SK-N-SH (cell line): ENCODE measurements at regions of chr2 and their contacts with region 1.

Region 1: DNA sequence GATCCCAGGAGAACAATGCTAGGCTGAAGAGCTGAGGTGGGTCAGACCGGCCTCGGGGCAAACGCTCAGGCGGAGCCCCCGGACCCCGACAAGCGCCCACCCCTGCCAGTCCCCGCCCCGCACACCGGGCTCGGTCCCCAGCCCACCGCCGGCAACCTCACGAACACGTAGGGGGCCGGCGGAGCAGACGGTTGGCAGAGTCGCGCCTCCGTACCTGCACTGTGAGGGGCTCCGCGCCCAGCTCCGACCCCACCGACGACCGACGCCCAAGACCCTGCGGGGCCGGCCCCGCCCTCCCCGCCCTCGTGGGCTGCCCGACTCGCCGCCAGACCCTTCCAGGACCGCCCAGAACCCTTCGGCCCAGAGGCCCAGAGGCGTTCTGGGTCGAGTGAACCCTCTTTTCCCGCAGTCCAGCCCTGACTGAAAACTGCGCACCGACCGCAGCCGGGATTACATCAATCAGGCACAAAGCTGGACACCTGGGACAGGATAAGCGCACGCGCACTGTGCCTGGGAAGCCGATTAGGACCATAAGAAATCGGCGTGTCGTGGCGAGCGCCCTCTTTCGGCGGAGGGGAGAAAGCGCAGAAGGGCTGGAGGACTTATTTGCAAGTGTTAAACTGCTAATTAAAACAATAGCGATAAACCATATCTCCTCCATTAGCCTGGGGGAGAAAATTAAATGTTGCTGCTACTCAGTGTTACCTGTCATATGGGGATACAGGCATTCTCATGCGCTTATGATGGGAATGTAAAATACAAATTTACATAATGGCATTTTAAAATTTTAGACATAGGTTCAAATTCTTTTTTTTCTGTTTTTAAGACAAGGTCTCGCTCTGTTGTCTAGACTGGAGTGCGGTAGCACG is 11.7 kb upstream of the DCTN1 start:
- DNase-seq: peak; percentile 94
- H3K4me3 ChIP-seq: peak overlapping the region; percentile 84 to 94
- H3K27ac ChIP-seq: peak overlapping the region; percentile 64 to 80
- H3K4me1 ChIP-seq: peaks cover 9 to 20% of the 10 kb centered on the region in 2 experiments; a peak in 3 of 4 replicates
- H3K27me3 ChIP-seq: no peaks in the 10 kb centered on the region
- CTCF ChIP-seq: peak; percentile 98
- EP300 ChIP-seq: no peak
- RAD21 ChIP-seq: peak; percentile 66

Region 2: GRCh38 chr2:74357627-74358026 is 34.2 kb before region 1 on chr2:
- CTCF ChIA-PET with region 1: interaction called, 14 read pairs
- POLR2A ChIA-PET with region 1: no interaction called
- DNase-seq: no peak
- H3K4me3 ChIP-seq: no peak overlapping the region
- H3K27ac ChIP-seq: no peak overlapping the region
- H3K4me1 ChIP-seq: no peaks in the 10 kb centered on the region
- H3K27me3 ChIP-seq: no peaks in the 10 kb centered on the region
- CTCF ChIP-seq: no peak
- EP300 ChIP-seq: no peak
- RAD21 ChIP-seq: no peak

Region 3: DNA sequence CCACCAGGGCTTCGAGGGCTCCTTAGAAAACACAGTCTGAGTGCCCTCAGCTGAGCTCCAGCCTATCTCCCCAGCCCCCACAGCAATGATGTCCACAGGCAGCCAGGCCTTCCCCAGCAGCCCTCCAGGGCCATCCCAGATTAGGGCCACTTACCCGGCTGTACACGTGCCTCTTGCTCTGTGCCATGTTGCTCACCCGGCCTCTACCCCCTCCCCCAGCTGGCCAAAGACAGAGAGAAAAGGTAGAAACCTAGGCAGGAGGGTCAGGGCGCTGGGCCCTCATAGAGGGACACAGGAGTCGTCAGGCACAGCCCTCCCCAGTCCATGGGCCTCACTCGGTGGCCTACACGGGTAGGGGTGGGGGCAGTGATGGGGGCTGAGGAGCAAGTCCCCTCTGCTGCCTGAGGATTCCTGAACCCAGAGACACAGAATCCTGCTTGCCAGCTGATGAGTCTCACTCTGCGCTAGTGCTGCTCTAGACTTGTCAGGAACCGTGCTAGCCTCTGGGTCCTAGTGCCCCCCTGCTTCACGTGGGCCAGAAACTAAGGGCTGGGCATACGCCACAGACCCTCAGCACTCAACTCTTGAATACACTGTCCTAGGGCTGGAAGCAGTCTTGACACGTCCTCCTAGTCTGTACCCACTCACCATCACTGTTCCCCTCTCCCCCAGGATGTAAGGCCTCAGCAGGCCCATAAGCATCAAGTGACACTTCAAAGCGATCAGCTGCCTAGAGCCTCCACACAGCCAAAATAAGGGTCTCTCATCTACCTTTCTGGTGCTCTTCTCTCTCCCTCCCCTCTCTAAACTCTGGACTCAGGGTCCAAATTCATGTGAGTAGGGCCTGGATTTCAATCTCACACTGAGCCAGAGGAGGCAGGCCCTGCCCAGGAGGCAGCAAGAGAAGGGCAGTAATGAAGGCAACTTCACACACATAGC is 11.7 kb before region 1 on chr2 and contains the start of gene DCTN1:
- CTCF ChIA-PET with region 1: interaction called, 24 read pairs
- POLR2A ChIA-PET with region 1: interaction called, 7 read pairs
- DNase-seq: peak; percentile 83
- H3K4me3 ChIP-seq: peak within 1 kb of the TSS; percentile 46 to 47
- H3K27ac ChIP-seq: peak within 1 kb of the TSS; percentile 37 to 62; a peak in 3 of 4 replicates
- H3K4me1 ChIP-seq: peaks cover 7 to 20% of the 10 kb centered on the region in 2 experiments; a peak in 2 of 4 replicates
- H3K27me3 ChIP-seq: no peaks in the 10 kb centered on the region
- CTCF ChIP-seq: no peak
- EP300 ChIP-seq: no peak
- RAD21 ChIP-seq: no peak
- polyA plus RNA-seq, gene DCTN1: 88.9 and 91.1 TPM in 2 replicates

Region 4: DNA sequence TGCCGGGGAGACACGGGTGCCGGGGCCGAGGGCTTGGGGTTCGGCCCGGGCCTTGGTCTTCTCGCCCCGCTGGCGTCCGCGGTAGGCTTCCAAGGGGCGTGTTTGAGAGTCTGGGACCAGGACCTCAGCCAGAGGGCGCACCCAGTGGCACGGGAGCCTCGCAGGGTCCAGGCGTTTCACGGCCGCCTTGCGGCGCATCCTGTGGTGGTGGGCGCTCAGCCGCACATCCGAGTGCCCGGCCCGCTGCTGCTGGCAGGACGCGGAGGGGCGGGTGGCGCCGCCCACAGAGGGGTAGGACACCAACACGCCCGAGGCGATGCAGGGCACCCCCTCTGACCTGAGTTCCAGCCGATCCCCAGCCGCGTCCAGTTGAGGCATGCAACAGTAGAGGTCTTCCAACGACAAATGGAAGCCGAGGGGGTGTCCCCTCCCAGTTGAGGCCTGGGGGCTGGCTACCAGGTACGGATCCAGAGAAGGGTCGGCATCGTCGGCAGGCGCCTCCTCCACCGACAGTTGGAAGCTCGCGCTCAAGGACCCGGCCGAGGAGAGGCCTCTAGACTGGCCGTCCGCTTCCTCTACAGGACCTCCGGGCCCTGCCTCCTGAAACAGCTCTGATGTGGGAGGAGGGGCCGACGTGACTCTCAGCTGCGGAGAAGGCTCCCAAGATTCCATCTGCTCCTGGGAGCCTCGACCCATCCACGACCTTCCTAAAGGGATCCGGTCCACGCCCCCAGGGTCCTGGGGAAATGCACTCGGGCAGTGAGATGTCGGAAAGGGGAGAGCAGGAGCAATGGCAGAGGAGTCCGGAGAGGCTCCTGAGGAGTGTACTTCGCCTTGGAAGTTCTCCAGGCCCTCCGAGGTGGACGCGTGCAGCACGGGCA is 23.3 kb after region 1 on chr2:
- CTCF ChIA-PET with region 1: interaction called, 22 read pairs
- POLR2A ChIA-PET with region 1: interaction called, 6 read pairs
- DNase-seq: peak; percentile 28
- H3K4me3 ChIP-seq: no peak overlapping the region
- H3K27ac ChIP-seq: no peak overlapping the region
- H3K4me1 ChIP-seq: peaks cover 0 to 2% of the 10 kb centered on the region in 2 experiments; a peak in 1 of 4 replicates
- H3K27me3 ChIP-seq: no peaks in the 10 kb centered on the region
- CTCF ChIP-seq: no peak
- EP300 ChIP-seq: no peak
- RAD21 ChIP-seq: no peak

Region 5: DNA sequence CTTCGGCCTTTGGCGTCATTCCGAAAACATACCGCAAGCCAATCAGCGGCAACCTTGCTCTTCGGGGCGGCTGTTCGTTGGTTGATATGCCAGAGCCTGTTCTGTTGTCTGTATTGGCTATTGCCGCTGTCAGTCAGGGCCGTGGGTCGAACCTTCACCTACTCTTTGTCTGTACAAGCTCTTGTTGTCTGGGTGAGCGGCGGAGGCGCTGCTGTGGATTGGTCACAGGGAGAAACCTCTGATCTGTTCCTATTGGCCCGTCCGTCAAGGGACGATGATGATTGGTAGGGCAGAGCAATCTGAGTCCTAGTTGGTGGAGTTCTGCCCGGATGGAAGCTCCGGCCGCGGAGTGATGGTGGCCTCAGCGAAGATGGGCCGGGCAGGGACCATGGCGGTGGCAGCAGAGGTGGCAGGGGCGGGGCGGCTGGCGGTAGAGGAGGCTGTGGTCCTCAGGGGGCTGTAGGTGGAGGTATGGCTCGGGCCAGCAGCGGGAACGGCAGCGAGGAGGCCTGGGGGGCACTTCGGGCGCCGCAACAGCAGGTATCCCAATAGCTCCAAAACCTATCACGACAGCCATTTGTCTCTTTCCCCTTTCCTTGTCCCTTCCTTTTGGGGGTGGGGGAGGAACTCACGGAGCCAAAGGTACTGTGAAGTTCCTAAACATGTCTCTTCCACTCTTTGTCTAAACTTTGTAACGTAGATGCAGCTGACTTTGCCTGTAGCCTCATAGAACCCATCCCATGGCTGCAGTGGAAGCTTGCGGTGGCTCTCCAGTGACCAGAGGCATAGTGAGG is 66.5 kb after region 1 on chr2 and contains the start of gene WBP1:
- CTCF ChIA-PET with region 1: interaction called, 10 read pairs
- POLR2A ChIA-PET with region 1: interaction called, 4 read pairs
- DNase-seq: peak; percentile 94
- H3K4me3 ChIP-seq: peak within 1 kb of the TSS; percentile 73 to 98
- H3K27ac ChIP-seq: peak within 1 kb of the TSS; percentile 69 to 99; a peak in 3 of 4 replicates
- H3K4me1 ChIP-seq: peaks cover 14 to 35% of the 10 kb centered on the region in 2 experiments; a peak in 3 of 4 replicates
- H3K27me3 ChIP-seq: no peaks in the 10 kb centered on the region
- CTCF ChIP-seq: no peak
- EP300 ChIP-seq: no peak
- RAD21 ChIP-seq: no peak
- polyA plus RNA-seq, gene WBP1: 184 and 193 TPM in 2 replicates